ENCODE measurements at regions of chr2 and their contacts with region 1.

Region 1: GRCh38 chr2:86446060-86446459 is 4.9 kb downstream of the KDM3A start:
- DNase-seq: no peak
- H3K4me3 ChIP-seq: no peak overlapping the region
- H3K27ac ChIP-seq: no peak overlapping the region
- H3K4me1 ChIP-seq: peaks cover 16% of the 10 kb centered on the region
- CTCF ChIP-seq: no peak

Region 2: DNA sequence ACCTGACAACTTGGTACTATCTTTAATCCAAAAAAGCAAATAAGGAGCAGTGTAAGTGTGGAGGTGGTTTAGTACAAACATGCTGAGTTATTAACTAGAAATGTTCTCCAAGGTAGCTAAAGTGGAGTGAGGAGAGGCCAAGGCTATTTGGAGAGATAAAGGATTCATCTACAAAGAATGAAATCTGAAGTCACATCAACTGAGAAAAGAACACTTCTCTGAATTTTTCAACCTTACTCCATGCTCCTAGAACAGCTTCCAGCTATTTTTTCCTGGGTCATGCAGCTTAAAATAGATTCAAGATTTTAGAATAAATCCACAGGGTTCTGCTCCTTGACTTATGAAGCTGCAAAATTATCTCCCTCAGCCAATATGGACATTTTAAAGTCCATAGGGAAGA is 269.5 kb before region 1 on chr2:
- CTCF ChIA-PET with region 1: no interaction called
- POLR2A ChIA-PET with region 1: no interaction called
- intact Hi-C with region 1: no loop called
- DNase-seq: no peak
- H3K4me3 ChIP-seq: no peak overlapping the region
- H3K27ac ChIP-seq: no peak overlapping the region
- H3K4me1 ChIP-seq: peaks cover 12% of the 10 kb centered on the region
- CTCF ChIP-seq: no peak

Region 3: GRCh38 chr2:86498468-86499250 is 52.6 kb after region 1 on chr2:
- CTCF ChIA-PET with region 1: no interaction called
- POLR2A ChIA-PET with region 1: interaction called, 3 read pairs
- intact Hi-C with region 1: loop called (anchors 5 kb)
- DNase-seq: no peak
- H3K4me3 ChIP-seq: no peak overlapping the region
- H3K27ac ChIP-seq: no peak overlapping the region
- H3K4me1 ChIP-seq: no peaks in the 10 kb centered on the region
- CTCF ChIP-seq: no peak